Sigmoid colon (tissue), 7 donors: ENCODE measurements at regions of chr20 and their contacts with region 1.

Region 1: GRCh38 chr20:17806739-17807441 is 107.1 kb downstream of the BANF2 start:
- DNase-seq: peak; percentile 91
- H3K4me3 ChIP-seq: peak overlapping the region in 1 of 4 donors; percentile 1
- H3K27ac ChIP-seq: peak overlapping the region; percentile 71 to 76 (median 74)
- H3K4me1 ChIP-seq: peaks cover 0 to 49% (median 38%) of the 10 kb centered on the region in 4 donors
- H3K27me3 ChIP-seq: no peaks in the 10 kb centered on the region
- CTCF ChIP-seq: no peak
- EP300 ChIP-seq: no peak
- POLR2A ChIP-seq: no peak

Region 2: GRCh38 chr20:17511401-17511800 is 295.5 kb before region 1 on chr20:
- intact Hi-C with region 1: no loop called
- DNase-seq: no peak
- H3K4me3 ChIP-seq: no peak overlapping the region
- H3K27ac ChIP-seq: no peak overlapping the region
- H3K4me1 ChIP-seq: no peaks in the 10 kb centered on the region
- H3K27me3 ChIP-seq: no peaks in the 10 kb centered on the region
- CTCF ChIP-seq: no peak
- EP300 ChIP-seq: no peak
- POLR2A ChIP-seq: no peak

Region 3: DNA sequence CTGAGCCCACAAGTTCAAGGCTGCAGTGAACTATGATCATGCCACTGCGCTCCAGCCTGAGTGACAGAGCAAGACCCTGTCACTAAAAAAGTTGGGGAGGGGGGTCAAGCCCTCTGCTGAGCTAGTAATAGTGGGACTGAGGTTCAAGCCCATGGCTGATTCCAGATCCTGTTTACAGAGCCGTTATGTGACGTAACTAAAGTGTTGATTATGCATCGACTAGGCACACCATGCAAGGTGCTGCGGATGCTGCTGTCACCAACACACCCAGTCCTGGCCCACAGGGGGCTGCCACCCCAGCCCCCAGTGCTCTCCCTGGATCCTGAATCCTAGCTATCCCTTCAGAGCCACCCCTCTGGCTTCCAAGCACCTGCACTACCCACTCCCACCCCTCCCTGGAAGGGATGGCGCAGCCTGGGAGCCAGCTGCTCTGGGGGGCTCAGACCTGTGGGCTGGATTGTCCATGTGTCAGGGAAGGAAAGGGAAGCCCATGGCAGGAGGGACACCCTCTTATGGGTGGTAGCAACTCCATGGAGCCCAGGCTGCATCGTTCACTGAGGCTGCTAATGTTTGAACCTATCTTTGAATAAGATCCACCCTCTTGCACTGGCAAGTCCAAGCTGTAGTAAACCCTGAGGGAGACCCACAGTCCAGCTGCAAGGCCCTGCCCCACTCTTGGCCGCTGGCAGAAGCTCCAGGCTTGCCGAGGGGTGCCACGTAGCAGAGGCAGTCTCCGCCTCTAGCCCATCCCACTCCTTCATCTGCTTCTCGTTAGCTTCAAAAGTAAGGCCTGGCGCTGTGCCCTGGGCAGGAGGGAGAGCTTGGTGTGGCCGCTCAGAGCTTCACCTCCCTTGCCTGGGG is 66.8 kb after region 1 on chr20:
- intact Hi-C with region 1: loop called (anchors 5 kb)
- DNase-seq: peak; percentile 97
- H3K4me3 ChIP-seq: no peak overlapping the region
- H3K27ac ChIP-seq: peak overlapping the region; percentile 69 to 82 (median 82)
- H3K4me1 ChIP-seq: peaks cover 3 to 45% (median 34%) of the 10 kb centered on the region in 4 donors
- H3K27me3 ChIP-seq: no peaks in the 10 kb centered on the region
- CTCF ChIP-seq: no peak
- EP300 ChIP-seq: no peak
- POLR2A ChIP-seq: peak in 1 of 2 donors; percentile 34

Region 4: GRCh38 chr20:17898548-17898994 is 91.7 kb after region 1 on chr20:
- intact Hi-C with region 1: loop called (anchors 5 kb)
- DNase-seq: peak; percentile 90
- H3K4me3 ChIP-seq: no peak overlapping the region
- H3K27ac ChIP-seq: no peak overlapping the region
- H3K4me1 ChIP-seq: peaks cover 0 to 25% (median 16%) of the 10 kb centered on the region in 4 donors
- H3K27me3 ChIP-seq: no peaks in the 10 kb centered on the region
- CTCF ChIP-seq: peak; percentile 77 to 97 (median 95)
- EP300 ChIP-seq: no peak
- POLR2A ChIP-seq: no peak

Region 5: DNA sequence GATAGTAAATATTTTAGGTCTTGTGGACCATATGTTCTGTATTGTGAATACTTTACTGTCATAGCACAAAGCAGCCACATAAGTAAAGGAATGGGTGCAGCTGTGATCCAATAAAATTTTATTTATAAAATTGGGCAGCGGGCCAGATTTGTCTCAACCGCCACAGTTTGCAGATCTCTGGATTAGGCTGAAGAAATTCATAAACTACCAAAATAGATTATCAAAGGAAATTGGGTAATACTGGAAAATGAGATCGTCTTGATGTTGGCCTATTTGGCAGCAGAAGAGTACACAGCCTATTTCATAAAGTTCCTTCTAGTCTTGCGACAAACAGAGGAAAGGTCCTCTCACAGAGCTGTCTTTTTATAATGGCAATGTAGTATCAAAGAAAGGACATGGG is 590.1 kb after region 1 on chr20:
- intact Hi-C with region 1: no loop called
- DNase-seq: no peak
- H3K4me3 ChIP-seq: no peak overlapping the region
- H3K27ac ChIP-seq: no peak overlapping the region
- H3K4me1 ChIP-seq: no peaks in the 10 kb centered on the region
- H3K27me3 ChIP-seq: no peaks in the 10 kb centered on the region
- CTCF ChIP-seq: no peak
- EP300 ChIP-seq: no peak
- POLR2A ChIP-seq: no peak